ENCODE measurements at regions of chr12 and their contacts with region 1.

Region 1: DNA sequence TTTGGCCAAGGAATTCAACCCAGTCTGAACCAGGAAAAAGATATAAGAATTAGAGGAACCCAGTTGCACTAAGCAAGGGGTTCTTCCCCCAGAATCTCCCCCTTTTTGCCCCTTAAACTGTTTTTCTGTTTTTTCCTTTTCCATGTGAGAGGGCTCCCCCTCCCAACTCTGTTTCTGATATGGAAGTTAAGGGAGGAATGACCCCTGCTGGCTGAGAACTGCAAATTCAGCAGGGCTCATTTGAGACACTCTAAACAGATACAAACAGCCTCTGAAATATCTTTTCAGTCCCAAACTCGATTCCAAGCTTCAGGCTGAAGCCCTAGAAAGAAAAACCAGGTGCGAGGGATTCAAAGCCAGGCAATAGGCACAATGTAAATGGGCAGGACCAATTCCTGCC is 132.7 kb downstream of the SLC41A2 start:
- DNase-seq: peak in 1 of 2 donors; percentile 20
- ATAC-seq: no peak
- H3K4me3 ChIP-seq: no peak overlapping the region
- H3K4me3 Mint-ChIP-seq: no peak overlapping the region
- H3K27ac ChIP-seq: no peak overlapping the region
- H3K27ac Mint-ChIP-seq: no peak overlapping the region
- H3K4me1 ChIP-seq: no peaks in the 10 kb centered on the region
- H3K4me1 Mint-ChIP-seq: no peaks in the 10 kb centered on the region
- H3K27me3 ChIP-seq: no peaks in the 10 kb centered on the region
- H3K27me3 Mint-ChIP-seq: peaks cover 0 to 2% of the 10 kb centered on the region in 2 donors
- CTCF ChIP-seq: peak; percentile 23

Region 2: GRCh38 chr12:104381731-104382480 is 443.5 kb before region 1 on chr12:
- intact Hi-C with region 1: loop called (anchors 1 kb)
- DNase-seq: peak; percentile 73 to 92
- ATAC-seq: peak; percentile 88 to 94 (median 91)
- H3K4me3 ChIP-seq: no peak overlapping the region
- H3K4me3 Mint-ChIP-seq: no peak overlapping the region
- H3K27ac ChIP-seq: no peak overlapping the region
- H3K27ac Mint-ChIP-seq: peak overlapping the region in 1 of 2 donors; percentile 75
- H3K4me1 ChIP-seq: peaks cover 9% of the 10 kb centered on the region
- H3K4me1 Mint-ChIP-seq: peaks cover 11 to 18% of the 10 kb centered on the region in 2 donors
- H3K27me3 ChIP-seq: peaks cover 3% of the 10 kb centered on the region
- H3K27me3 Mint-ChIP-seq: peaks cover 6 to 7% of the 10 kb centered on the region in 2 donors
- CTCF ChIP-seq: peak; percentile 97

Region 3: DNA sequence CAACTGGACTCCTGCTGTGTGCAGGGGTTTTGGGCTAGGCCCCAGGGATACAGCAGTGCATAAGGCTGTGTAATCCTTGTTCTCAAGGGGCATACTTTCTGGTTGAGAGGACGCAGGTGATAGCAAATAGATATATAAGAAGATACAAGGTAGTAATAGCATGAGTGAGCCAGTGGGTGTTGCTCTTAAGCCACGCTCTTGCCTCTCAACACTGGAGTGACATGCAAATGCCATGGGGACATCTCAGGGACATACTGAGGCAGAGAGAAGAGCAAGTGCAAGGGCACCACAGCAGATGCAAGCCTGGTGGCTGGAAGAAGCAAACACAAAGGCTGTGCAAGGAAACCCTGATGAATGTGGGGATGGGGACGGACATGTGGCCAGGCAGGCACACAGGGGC is 145.3 kb before region 1 on chr12:
- intact Hi-C with region 1: loop called (anchors 5 kb)
- DNase-seq: peak in 1 of 2 donors; percentile 69
- ATAC-seq: peak; percentile 36 to 49 (median 46)
- H3K4me3 ChIP-seq: no peak overlapping the region
- H3K4me3 Mint-ChIP-seq: no peak overlapping the region
- H3K27ac ChIP-seq: no peak overlapping the region
- H3K27ac Mint-ChIP-seq: peak overlapping the region; percentile 65 to 93
- H3K4me1 ChIP-seq: peaks cover 49% of the 10 kb centered on the region
- H3K4me1 Mint-ChIP-seq: peaks cover 81 to 82% of the 10 kb centered on the region in 2 donors
- H3K27me3 ChIP-seq: no peaks in the 10 kb centered on the region
- H3K27me3 Mint-ChIP-seq: no peaks in the 10 kb centered on the region
- CTCF ChIP-seq: peak; percentile 29

Region 4: DNA sequence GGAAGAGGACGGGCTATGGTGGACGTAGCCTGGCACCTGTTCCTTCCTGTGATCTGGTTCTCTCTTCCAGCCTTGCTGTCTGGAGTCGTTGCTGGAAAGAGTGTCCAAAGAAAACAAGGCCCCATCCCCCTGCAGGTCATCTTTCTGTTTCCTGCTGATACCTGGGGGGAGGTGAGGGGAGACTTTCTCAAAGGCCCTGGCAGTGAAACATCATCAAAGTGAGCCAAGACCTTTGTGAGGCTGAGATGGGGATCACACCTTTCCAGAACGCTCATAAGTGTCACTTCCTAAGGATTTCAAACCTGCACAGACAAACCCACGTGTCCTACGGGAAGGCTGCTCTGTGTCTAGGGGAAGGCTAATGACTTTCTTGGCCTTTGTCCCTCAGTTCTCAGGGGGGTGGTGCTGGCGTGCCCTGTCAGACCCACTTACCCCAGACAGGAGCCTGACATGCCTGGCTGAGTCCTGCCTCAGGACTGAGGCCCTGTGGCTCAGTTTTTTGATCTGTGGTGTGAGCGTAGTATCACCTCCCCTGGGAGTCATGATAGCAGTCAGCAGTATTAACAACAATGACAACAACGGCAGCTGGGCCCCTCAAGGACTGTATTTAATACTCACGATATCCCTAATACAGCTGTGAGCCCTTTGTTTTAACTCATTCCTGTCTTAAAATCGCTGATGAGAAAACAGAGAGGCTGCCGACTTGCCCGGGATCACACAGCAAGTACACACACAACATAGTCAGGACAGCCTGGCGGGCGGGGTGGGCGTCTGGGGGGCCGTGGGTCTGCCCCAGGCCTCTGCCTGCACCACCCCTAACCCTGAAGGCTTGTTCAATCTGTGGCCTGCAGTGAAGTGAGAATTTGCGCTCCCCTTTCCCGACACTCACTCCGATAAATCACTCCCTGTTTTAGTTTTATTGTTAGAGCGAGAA is 102.5 kb before region 1 on chr12:
- intact Hi-C with region 1: no loop called
- DNase-seq: no peak
- ATAC-seq: peak in 1 of 3 donors; percentile 15
- H3K4me3 ChIP-seq: no peak overlapping the region
- H3K4me3 Mint-ChIP-seq: peak overlapping the region; percentile 21
- H3K27ac ChIP-seq: no peak overlapping the region
- H3K27ac Mint-ChIP-seq: peak overlapping the region; percentile 92 to 94
- H3K4me1 ChIP-seq: peaks cover 58% of the 10 kb centered on the region
- H3K4me1 Mint-ChIP-seq: peaks cover 83 to 93% of the 10 kb centered on the region in 2 donors
- H3K27me3 ChIP-seq: no peaks in the 10 kb centered on the region
- H3K27me3 Mint-ChIP-seq: no peaks in the 10 kb centered on the region
- CTCF ChIP-seq: no peak

Region 5: GRCh38 chr12:105257321-105257728 is 431.9 kb after region 1 on chr12:
- intact Hi-C with region 1: no loop called
- DNase-seq: no peak
- ATAC-seq: no peak
- H3K4me3 ChIP-seq: no peak overlapping the region
- H3K4me3 Mint-ChIP-seq: no peak overlapping the region
- H3K27ac ChIP-seq: no peak overlapping the region
- H3K27ac Mint-ChIP-seq: no peak overlapping the region
- H3K4me1 ChIP-seq: no peaks in the 10 kb centered on the region
- H3K4me1 Mint-ChIP-seq: peaks cover 0 to 5% of the 10 kb centered on the region in 2 donors
- H3K27me3 ChIP-seq: no peaks in the 10 kb centered on the region
- H3K27me3 Mint-ChIP-seq: peaks cover 10 to 11% of the 10 kb centered on the region in 2 donors
- CTCF ChIP-seq: no peak

Measured in natural killer cell (primary cell).